ENCODE measurements at regions of chr1 and their contacts with region 1.

Region 1: GRCh38 chr1:211514030-211514754 is 22.2 kb upstream of the RD3 start:
- DNase-seq: peak; percentile 94
- H3K4me3 Mint-ChIP-seq: peak overlapping the region; percentile 52
- H3K27ac Mint-ChIP-seq: peak overlapping the region; percentile 42
- H3K4me1 Mint-ChIP-seq: peaks cover 42% of the 10 kb centered on the region
- H3K27me3 Mint-ChIP-seq: no peaks in the 10 kb centered on the region
- CTCF ChIP-seq: peak; percentile 81

Region 2: GRCh38 chr1:211133836-211134669 is 380.1 kb before region 1 on chr1 and contains the start of gene KCNH1:
- CTCF ChIA-PET with region 1: interaction called, 6 read pairs
- intact Hi-C with region 1: loop called (anchors 2 kb)
- DNase-seq: peak; percentile 91
- H3K4me3 Mint-ChIP-seq: peak within 1 kb of the TSS; percentile 65
- H3K27ac Mint-ChIP-seq: no peak within 1 kb of the TSS
- H3K4me1 Mint-ChIP-seq: no peaks in the 10 kb centered on the region
- H3K27me3 Mint-ChIP-seq: peaks cover 81% of the 10 kb centered on the region
- CTCF ChIP-seq: peak; percentile 98
- total RNA-seq, gene KCNH1: not detected in 2 replicates

Region 3: DNA sequence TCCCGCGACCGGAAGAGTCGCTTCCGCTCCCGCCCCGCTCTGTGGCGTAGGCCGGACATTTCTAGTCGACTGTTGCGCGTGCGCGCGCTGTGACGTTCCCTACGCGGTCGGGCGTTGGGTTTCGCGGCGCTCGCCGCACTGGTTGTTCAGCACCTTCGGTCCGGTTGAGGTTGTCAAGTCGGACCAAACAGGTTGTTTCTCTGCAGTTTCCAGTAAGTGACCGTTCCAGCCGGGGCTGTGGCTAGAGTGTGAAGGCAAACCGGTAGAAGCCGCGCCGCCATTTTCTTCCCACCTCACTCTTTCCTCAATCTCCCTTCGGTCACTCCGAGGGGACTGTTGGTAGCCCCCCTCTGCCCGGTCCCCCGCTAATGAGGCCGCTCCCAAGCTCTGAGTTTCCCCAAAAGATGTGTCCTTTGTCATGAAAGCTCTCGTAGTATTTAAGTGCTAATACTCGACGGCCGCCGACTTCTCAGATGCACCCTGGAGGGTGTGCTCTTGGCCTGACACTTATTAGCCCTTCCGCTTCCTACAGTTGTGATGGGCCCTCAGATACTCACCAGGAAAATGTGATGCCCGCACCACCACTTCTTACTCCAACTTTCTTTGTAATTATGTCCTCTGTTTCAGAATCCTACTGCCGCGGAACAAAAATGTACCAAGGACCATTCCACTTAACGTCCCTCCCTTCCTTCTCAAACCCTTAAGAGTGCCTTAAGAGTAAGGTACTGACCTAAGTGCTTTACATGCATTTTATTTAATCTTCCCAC is 131.3 kb before region 1 on chr1:
- CTCF ChIA-PET with region 1: no interaction called
- intact Hi-C with region 1: loop called (anchors 10 kb)
- DNase-seq: peak; percentile 93
- H3K4me3 Mint-ChIP-seq: peak overlapping the region; percentile 94
- H3K27ac Mint-ChIP-seq: peak overlapping the region; percentile 100
- H3K4me1 Mint-ChIP-seq: peaks cover 13% of the 10 kb centered on the region
- H3K27me3 Mint-ChIP-seq: no peaks in the 10 kb centered on the region
- CTCF ChIP-seq: no peak

Region 4: GRCh38 chr1:211527006-211527405 is 12.8 kb after region 1 on chr1:
- CTCF ChIA-PET with region 1: interaction called, 10 read pairs
- intact Hi-C with region 1: no loop called
- DNase-seq: no peak
- H3K4me3 Mint-ChIP-seq: no peak overlapping the region
- H3K27ac Mint-ChIP-seq: no peak overlapping the region
- H3K4me1 Mint-ChIP-seq: no peaks in the 10 kb centered on the region
- H3K27me3 Mint-ChIP-seq: peaks cover 8% of the 10 kb centered on the region
- CTCF ChIP-seq: no peak

Region 5: GRCh38 chr1:211578640-211579433 is 64.6 kb after region 1 on chr1 and contains the start of gene SLC30A1:
- CTCF ChIA-PET with region 1: interaction called, 11 read pairs
- intact Hi-C with region 1: loop called (anchors 1 kb)
- DNase-seq: peak; percentile 99
- H3K4me3 Mint-ChIP-seq: peak within 1 kb of the TSS; percentile 95
- H3K27ac Mint-ChIP-seq: peak within 1 kb of the TSS; percentile 92
- H3K4me1 Mint-ChIP-seq: peaks cover 23% of the 10 kb centered on the region
- H3K27me3 Mint-ChIP-seq: no peaks in the 10 kb centered on the region
- CTCF ChIP-seq: no peak
- total RNA-seq, gene SLC30A1: 15.5 and 25.3 TPM in 2 replicates

Region 6: DNA sequence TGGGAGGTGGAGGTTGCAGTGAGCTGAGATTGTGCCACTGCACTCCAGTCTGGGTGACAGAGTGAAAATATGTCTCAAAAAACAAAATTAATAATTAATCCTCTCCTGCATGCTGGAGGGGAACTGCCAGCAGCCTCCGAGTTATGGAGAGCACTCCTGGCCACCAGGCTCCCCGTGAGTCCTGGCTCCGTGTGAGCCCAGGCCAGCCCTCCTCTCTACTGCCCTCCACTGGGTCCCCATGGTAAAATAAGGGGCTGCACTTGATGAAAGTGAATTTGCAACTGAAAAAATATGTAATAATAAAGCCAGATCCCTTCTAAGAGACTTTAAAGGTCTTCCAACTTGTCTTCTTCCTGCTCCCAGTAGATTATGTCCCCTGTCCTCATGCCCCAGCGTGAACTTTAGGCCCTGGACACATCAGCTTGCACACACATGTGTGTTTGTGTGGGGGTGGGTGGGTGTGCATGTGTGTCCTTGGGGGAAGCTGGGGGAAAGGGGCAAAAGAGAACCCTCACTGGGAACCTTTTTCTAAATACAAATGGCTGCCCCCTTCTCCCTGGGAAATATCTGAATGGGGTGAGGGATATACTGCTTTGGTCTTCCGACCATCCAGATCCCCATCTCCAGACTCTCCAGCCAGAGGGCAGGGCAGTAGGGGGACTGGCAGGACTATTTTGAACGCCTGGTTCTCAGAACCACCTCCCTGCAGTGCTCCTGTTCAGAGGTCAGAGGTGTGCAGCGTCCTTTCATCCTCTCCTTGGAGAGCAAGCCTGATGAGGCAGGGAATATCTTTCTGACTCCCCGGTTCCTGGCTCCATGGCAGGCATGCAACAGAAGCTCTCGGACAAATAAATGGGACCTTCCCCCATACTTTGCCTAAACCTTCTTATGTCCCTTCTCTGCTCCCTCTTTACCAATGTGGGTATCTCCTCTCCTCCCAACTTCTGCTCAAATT is 135.1 kb after region 1 on chr1:
- CTCF ChIA-PET with region 1: interaction called, 20 read pairs
- intact Hi-C with region 1: loop called (anchors 2 kb)
- DNase-seq: peak; percentile 87
- H3K4me3 Mint-ChIP-seq: no peak overlapping the region
- H3K27ac Mint-ChIP-seq: peak overlapping the region; percentile 55
- H3K4me1 Mint-ChIP-seq: peaks cover 46% of the 10 kb centered on the region
- H3K27me3 Mint-ChIP-seq: no peaks in the 10 kb centered on the region
- CTCF ChIP-seq: peak; percentile 74

Region 7: GRCh38 chr1:212002536-212002935 is 488.3 kb after region 1 on chr1:
- CTCF ChIA-PET with region 1: no interaction called
- intact Hi-C with region 1: no loop called
- DNase-seq: no peak
- H3K4me3 Mint-ChIP-seq: no peak overlapping the region
- H3K27ac Mint-ChIP-seq: no peak overlapping the region
- H3K4me1 Mint-ChIP-seq: no peaks in the 10 kb centered on the region
- H3K27me3 Mint-ChIP-seq: no peaks in the 10 kb centered on the region
- CTCF ChIP-seq: no peak